ENCODE measurements at regions of chr20 and their contacts with region 1.

Region 1: GRCh38 chr20:51447097-51447771 is 95.3 kb downstream of the NFATC2 start:
- DNase-seq: peak; percentile 79 to 81
- ATAC-seq: peak; percentile 16 to 54 (median 34)
- H3K4me3 ChIP-seq: no peak overlapping the region
- H3K27ac ChIP-seq: peak overlapping the region; percentile 31
- H3K4me1 ChIP-seq: peaks cover 38% of the 10 kb centered on the region
- H3K27me3 ChIP-seq: no peaks in the 10 kb centered on the region
- CTCF ChIP-seq: no peak

Region 2: DNA sequence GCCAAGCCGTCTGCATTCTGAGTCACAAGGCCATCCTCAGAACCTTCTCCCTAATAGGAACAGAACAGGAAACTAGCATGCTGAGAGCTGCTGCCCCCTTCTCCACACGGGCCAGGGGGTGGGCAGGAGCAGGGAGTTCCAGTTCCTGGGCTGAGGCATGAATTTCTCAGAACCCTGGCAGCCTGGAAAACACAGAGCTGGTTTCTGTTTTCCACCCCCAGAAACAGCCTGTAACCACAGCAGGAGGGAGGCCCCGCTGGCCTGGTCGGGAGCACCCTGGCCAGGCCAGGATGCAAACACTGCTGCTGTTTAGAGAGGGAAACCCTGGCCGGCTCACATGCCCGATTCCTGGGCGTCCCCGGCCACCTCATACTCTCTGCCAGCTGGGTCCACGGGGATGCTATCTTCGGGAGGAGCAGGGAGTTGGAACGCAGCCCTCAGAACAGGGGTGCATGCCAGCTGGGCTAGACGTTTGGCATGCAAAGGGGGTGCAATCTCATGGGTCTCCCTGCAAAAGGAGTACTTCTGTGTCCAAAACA is 34.8 kb before region 1 on chr20:
- intact Hi-C with region 1: loop called in 1 of 2 experiments (anchors 5 kb)
- DNase-seq: peak in 1 of 2 donors; percentile 33
- ATAC-seq: peak; percentile 36 to 64 (median 57)
- H3K4me3 ChIP-seq: peak overlapping the region; percentile 41
- H3K27ac ChIP-seq: peak overlapping the region; percentile 60
- H3K4me1 ChIP-seq: peaks cover 13% of the 10 kb centered on the region
- H3K27me3 ChIP-seq: no peaks in the 10 kb centered on the region
- CTCF ChIP-seq: no peak